Gastrocnemius medialis (tissue), 4 donors: ENCODE measurements at regions of chr17 and their contacts with region 1.

Region 1: GRCh38 chr17:57243171-57243948 is 13.0 kb upstream of the MSI2 start:
- DNase-seq: peak; percentile 38 to 58
- ATAC-seq: peak; percentile 73 to 85
- H3K4me3 ChIP-seq: no peak overlapping the region
- H3K27ac ChIP-seq: peak overlapping the region; percentile 76 to 83 (median 79)
- H3K4me1 ChIP-seq: peaks cover 12 to 13% of the 10 kb centered on the region in 2 donors
- H3K27me3 ChIP-seq: no peaks in the 10 kb centered on the region
- CTCF ChIP-seq: peak; percentile 96 to 99 (median 98)
- POLR2A ChIP-seq: no peak

Region 2: DNA sequence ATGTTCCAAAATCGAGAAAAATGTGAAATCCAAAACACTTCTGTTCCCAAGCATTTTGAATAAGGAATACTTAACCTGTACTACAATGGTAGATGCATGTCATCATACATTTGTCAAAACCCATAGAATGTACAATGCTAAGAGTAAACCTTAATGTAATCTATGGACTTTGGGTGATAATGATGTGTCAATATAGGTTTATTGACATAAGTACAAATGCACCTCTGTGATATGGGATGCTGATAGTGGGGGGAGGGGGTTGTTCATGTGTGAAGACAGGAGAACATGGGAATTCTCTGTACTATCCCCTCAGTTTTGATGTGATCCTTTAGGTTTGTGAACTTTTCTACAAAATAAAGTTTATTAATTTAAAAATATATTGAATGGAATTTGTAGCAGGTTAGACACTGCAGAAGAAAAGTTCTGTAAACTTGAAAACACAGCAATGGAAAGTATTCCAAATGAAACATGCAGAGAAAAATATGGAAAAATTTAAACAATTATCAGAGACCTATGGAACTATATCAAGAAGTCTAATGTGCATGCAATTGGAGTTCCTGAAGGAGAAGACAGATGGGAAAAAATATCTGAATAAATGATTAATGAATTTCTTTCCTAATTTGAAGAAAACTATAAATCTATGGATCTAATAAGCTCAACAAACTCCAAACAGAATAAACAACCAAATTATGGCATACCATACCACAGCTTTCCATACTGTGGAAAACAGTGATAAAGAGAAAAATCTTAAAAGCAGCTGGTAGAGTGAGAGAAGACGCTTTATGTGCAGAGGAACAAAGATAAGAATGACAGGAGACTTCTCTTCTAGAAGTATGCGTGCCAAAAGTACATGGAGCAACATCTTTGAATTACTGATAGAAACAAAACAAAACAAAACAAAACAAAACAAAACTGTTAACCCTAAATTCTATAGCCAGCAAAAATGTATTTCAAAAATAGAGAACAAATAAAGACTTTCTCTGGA is 21.7 kb before region 1 on chr17:
- in situ Hi-C with region 1: no loop called
- intact Hi-C with region 1: no loop called
- DNase-seq: no peak
- ATAC-seq: no peak
- H3K4me3 ChIP-seq: no peak overlapping the region
- H3K27ac ChIP-seq: no peak overlapping the region
- H3K4me1 ChIP-seq: no peaks in the 10 kb centered on the region
- H3K27me3 ChIP-seq: no peaks in the 10 kb centered on the region
- CTCF ChIP-seq: no peak
- POLR2A ChIP-seq: no peak

Region 3: DNA sequence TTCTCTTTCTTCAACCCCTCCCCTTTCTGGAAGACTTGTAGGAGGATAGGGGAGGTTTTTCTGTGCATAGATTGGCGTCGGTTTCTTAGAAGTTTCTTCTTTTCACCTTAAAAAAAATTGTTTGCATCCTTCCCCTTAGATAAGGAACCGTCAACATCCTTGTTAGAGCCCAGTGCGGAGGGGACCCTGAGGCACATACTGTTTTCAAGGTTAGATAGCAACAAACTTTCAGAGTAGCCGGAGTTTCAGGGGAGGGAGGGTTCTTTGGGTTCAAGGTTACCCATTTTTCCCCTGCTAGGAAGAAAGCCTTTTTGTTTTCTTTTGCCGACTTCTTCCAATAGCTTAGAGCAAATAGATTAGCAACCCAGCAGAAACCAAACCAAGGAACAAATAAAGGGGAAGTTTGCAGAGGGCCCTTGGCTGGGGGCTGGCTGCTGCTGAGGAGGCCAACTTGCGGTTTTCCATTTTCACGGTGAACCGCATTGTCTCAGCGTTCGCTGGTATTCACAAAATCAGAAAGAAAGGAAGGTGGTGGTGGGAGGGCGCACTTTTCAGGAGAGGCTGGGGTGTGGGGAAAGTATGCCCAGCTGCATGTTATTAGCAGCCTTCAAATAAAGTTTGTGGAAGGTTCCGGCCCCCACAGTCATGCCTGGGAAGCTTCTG is 41.8 kb after region 1 on chr17:
- in situ Hi-C with region 1: no loop called
- intact Hi-C with region 1: loop called (anchors 5 kb)
- DNase-seq: no peak
- ATAC-seq: no peak
- H3K4me3 ChIP-seq: no peak overlapping the region
- H3K27ac ChIP-seq: peak overlapping the region; percentile 85 to 92 (median 88)
- H3K4me1 ChIP-seq: peaks cover 86 to 88% of the 10 kb centered on the region in 2 donors
- H3K27me3 ChIP-seq: no peaks in the 10 kb centered on the region
- CTCF ChIP-seq: no peak
- POLR2A ChIP-seq: no peak

Region 4: DNA sequence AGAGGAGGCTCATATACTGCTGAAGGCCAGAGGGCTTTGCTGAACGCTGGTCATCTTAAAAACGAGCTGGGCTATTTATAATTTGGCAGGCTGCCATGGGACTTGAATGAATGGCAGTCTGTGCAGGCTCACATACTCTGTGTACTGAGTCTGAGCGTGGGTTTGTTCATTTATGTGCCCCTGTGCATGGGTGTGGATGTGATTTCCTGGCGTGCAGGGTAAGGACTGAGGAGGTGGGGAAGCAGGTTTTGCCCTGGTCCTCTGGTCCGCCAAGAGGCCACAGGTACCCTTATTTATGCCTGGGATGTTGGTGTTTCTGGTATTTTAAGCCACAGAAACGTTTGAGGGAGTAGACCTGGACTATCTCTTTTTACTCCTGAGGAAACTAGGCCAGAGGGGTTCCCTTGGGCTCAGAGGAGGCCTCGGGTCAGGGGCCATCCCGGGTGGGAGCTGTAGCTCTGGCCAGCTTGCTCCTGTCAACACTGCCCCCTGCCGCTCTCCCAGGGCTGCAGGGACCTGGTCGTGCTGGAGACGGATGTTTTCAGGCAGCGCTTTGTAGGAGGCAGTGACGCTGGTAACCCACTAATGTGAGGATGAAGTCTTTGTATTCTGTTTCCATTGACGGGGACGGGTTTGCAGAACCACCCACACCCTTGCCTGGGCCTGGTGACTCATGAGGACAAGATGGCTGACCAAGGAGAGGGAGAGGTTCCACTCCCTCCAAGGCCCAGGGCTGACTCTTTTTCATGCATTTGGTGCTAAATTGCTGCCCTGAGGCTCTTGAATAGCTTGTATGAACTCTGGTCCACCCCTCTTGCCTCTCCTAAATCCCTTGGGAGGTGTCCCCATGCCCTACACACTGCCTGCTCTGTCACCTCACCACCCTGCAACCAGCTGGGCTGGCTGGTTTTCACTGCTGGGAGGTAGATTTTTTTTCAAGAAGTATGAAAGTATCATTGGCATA is 197.4 kb after region 1 on chr17:
- in situ Hi-C with region 1: no loop called
- intact Hi-C with region 1: loop called (anchors 2 kb)
- DNase-seq: peak; percentile 58 to 75
- ATAC-seq: peak; percentile 76 to 79
- H3K4me3 ChIP-seq: no peak overlapping the region
- H3K27ac ChIP-seq: peak overlapping the region; percentile 90 to 96 (median 92)
- H3K4me1 ChIP-seq: peaks cover 78 to 85% of the 10 kb centered on the region in 2 donors
- H3K27me3 ChIP-seq: no peaks in the 10 kb centered on the region
- CTCF ChIP-seq: peak in 2 of 5 experiments; percentile 11 to 21
- POLR2A ChIP-seq: no peak

Region 5: DNA sequence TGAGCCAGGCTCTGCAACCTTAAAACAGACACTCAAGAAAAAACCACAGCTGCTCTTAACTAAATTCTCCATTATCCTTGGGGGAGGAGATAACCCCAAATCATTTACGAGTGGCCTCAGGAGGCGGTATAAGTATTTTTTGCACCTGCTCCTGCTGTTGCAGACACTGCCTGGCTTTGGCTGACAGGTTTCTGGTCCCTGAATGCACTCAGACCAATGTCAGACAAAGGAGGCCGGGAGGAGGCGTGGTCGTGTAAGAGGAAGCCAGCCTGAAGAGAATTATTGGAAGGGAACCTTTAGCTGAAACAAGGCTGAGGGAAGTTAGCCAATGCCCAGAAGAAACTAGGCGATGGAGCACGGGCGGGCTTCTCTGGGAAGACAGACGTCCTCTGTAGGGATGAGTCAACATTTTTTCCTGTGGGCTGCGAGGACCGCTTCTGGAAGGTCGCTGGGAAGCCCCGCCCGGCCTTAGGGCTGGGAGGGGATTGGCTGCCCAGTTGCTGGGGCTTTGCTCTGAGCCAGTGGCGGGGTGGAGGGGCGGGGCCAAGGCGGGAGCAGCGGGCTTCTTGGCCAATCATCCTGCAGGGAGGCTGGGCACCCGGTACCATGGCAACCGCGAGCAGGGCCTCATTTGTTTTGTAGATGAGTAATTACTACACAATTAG is 419.4 kb after region 1 on chr17:
- in situ Hi-C with region 1: loop called in 1 of 4 experiments (anchors 5 kb)
- intact Hi-C with region 1: loop called (anchors 2 kb)
- DNase-seq: peak; percentile 86 to 95
- ATAC-seq: peak; percentile 90 to 94
- H3K4me3 ChIP-seq: peak overlapping the region; percentile 15 to 57 (median 37)
- H3K27ac ChIP-seq: peak overlapping the region; percentile 77 to 91 (median 86)
- H3K4me1 ChIP-seq: peaks cover 30 to 35% of the 10 kb centered on the region in 2 donors
- H3K27me3 ChIP-seq: no peaks in the 10 kb centered on the region
- CTCF ChIP-seq: peak in 1 of 5 experiments; percentile 19
- POLR2A ChIP-seq: peak in 1 of 2 donors; percentile 52

Region 6: DNA sequence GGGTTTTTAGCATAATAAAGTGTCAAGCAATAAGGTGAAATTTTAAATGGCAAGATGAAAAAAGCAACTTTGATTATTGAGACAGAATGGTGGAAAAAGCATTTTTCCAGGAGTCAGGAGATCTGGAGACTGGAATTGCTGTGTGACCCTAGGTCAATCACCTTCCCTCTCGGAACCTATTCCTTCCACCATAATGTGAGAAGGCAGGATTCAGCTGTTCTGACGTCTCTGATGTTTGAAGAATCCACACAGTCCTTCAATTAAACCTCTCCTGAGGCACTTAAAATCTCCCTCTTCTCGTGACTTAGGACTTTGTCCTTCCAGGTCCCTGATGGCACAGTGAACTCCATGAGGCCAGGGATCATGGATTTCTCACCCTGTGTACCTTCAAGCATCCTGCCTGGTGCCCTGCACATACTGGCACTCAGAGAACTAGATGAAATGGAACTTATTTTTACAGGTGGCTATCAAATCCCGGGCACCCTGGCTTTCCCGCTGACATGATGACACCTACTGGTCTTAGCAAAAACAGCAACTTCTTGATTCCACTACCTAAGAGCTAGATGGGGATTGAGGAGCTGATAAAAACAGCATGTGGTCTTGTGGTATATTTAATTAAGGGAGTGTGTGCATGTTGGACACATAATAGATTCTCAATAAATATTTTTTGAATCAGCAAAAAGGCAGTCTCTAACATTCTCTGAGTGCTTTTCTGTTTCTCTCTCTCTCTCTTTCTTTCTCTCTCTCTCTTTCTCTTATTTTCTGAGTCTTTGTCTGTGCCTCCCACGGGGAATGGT is 504.1 kb after region 1 on chr17:
- in situ Hi-C with region 1: loop called in 1 of 4 experiments (anchors 25 kb)
- intact Hi-C with region 1: loop called (anchors 1 kb)
- DNase-seq: peak in 1 of 2 donors; percentile 24
- ATAC-seq: peak; percentile 62 to 87
- H3K4me3 ChIP-seq: no peak overlapping the region
- H3K27ac ChIP-seq: no peak overlapping the region
- H3K4me1 ChIP-seq: no peaks in the 10 kb centered on the region
- H3K27me3 ChIP-seq: no peaks in the 10 kb centered on the region
- CTCF ChIP-seq: peak; percentile 52 to 76 (median 58)
- POLR2A ChIP-seq: no peak

Region 7: GRCh38 chr17:57849874-57850754 is 606.8 kb after region 1 on chr17 and contains the start of gene MRPS23:
- in situ Hi-C with region 1: loop called in 1 of 4 experiments (anchors 25 kb)
- intact Hi-C with region 1: no loop called
- DNase-seq: peak; percentile 98 to 99
- ATAC-seq: peak; percentile 63 to 72
- H3K4me3 ChIP-seq: peak within 1 kb of the TSS; percentile 82 to 98 (median 88)
- H3K27ac ChIP-seq: peak within 1 kb of the TSS; percentile 91 to 98 (median 96)
- H3K4me1 ChIP-seq: peaks cover 52% of the 10 kb centered on the region in 2 donors
- H3K27me3 ChIP-seq: no peaks in the 10 kb centered on the region
- CTCF ChIP-seq: peak in 1 of 5 experiments; percentile 9
- POLR2A ChIP-seq: peak; percentile 83 to 87
- total RNA-seq, gene MRPS23: 24.3 to 47.2 (median 35.5) TPM